ENCODE measurements at regions of chr3 and their contacts with region 1.

Region 1: GRCh38 chr3:69013253-69014021 is at the start of gene EOGT:
- DNase-seq: peak; percentile 79
- H3K4me3 Mint-ChIP-seq: peak within 1 kb of the TSS; percentile 89
- H3K27ac Mint-ChIP-seq: peak within 1 kb of the TSS; percentile 86
- H3K4me1 Mint-ChIP-seq: peaks cover 30% of the 10 kb centered on the region
- H3K27me3 Mint-ChIP-seq: no peaks in the 10 kb centered on the region
- total RNA-seq, gene EOGT: 9.6 and 12.5 TPM in 2 replicates

Region 2: DNA sequence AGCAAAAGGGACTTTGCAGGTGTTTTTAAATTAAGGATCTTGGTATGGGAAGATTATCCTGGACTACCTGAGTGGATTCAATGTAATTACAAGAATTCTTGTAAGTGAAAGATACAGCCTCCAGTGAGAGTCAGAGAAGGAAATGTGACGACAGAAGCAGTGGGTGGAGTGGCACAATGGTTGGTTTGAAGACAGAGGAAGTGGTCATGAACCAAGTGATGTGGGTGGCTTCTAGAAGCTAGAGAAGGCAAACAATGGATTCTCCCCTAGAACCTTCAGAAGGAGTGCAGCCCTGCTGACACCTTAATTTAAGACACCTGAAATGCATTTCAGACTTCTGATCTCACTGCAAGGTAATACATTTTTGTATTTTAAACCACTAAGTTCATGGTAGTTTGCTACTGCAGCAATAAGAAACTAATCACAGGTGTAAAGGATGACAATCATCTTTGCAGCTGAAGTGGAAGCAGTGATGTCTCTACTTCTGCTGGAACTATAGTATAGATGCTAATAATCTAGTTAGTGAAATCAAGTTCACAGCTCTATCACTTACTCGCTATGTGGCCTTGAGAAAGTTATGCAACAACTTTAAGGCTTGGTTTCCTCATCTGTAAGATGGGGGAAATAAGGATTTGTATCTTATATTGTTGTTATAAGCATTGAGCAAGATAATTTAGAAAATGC is 955.7 kb before region 1 on chr3:
- intact Hi-C with region 1: loop called (anchors 10 kb)
- DNase-seq: peak; percentile 66
- H3K4me3 Mint-ChIP-seq: peak overlapping the region; percentile 54
- H3K27ac Mint-ChIP-seq: peak overlapping the region; percentile 76
- H3K4me1 Mint-ChIP-seq: peaks cover 59% of the 10 kb centered on the region
- H3K27me3 Mint-ChIP-seq: no peaks in the 10 kb centered on the region

Region 3: GRCh38 chr3:69033470-69033869 is 20.0 kb after region 1 on chr3:
- intact Hi-C with region 1: loop called (anchors 2 kb)
- DNase-seq: no peak
- H3K4me3 Mint-ChIP-seq: no peak overlapping the region
- H3K27ac Mint-ChIP-seq: peak overlapping the region; percentile 34
- H3K4me1 Mint-ChIP-seq: peaks cover 18% of the 10 kb centered on the region
- H3K27me3 Mint-ChIP-seq: no peaks in the 10 kb centered on the region

Region 4: GRCh38 chr3:69051756-69052471 is 38.5 kb after region 1 on chr3 and contains the start of gene TMF1:
- intact Hi-C with region 1: loop called (anchors 1 kb)
- DNase-seq: peak; percentile 96
- H3K4me3 Mint-ChIP-seq: peak within 1 kb of the TSS; percentile 97
- H3K27ac Mint-ChIP-seq: peak within 1 kb of the TSS; percentile 96
- H3K4me1 Mint-ChIP-seq: peaks cover 56% of the 10 kb centered on the region
- H3K27me3 Mint-ChIP-seq: peaks cover 1% of the 10 kb centered on the region
- total RNA-seq, gene TMF1: 43.0 and 43.1 TPM in 2 replicates

Region 5: GRCh38 chr3:69084326-69085167 is 71.1 kb after region 1 on chr3 and contains the start of gene ARL6IP5:
- intact Hi-C with region 1: loop called (anchors 1 kb)
- DNase-seq: peak; percentile 89
- H3K4me3 Mint-ChIP-seq: peak within 1 kb of the TSS; percentile 98
- H3K27ac Mint-ChIP-seq: peak within 1 kb of the TSS; percentile 94
- H3K4me1 Mint-ChIP-seq: peaks cover 61% of the 10 kb centered on the region
- H3K27me3 Mint-ChIP-seq: no peaks in the 10 kb centered on the region
- total RNA-seq, gene ARL6IP5: 147 and 156 TPM in 2 replicates

Region 6: DNA sequence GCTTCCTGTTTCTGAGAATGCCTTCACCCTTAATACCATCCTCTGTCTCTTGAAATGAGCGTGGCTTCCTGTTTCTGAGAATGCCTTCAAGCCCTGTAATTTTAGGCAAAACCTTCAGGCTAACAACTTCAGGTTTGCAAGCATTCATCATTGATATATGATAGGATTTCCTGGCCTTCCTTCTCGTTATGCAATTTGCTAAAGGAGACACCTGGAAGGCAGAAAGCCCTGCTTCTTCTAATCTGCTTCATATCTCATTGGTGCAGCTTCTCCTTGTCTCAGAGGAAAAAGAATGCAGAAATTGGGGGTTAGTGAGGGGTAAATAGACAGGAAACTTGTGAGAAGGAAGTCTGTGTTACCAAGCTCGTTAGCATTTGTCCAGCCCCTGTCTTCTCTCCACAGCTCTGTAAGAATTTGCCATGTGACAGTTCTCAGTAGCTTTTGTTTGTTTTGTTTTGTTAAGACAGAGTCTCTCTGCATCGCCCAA is 78.6 kb after region 1 on chr3:
- intact Hi-C with region 1: loop called (anchors 1 kb)
- DNase-seq: no peak
- H3K4me3 Mint-ChIP-seq: peak overlapping the region; percentile 84
- H3K27ac Mint-ChIP-seq: peak overlapping the region; percentile 98
- H3K4me1 Mint-ChIP-seq: peaks cover 83% of the 10 kb centered on the region
- H3K27me3 Mint-ChIP-seq: no peaks in the 10 kb centered on the region

Region 7: DNA sequence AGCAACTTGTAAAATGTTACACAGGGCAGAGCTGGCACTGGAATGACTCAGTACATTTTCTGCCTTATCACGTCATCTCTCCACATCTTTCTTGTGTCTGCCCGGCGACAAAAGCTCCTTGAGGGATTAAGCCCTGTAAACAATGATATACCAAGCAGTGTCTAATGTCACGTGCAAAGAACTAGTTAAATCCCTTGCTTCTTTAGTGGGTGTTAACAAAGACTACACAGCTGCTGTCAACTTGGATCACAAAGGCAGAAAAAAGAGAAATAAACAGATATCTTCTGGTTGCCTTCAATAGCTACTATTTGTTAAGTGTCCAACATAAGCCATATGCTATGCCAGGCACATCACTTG is 420.5 kb after region 1 on chr3:
- intact Hi-C with region 1: loop called (anchors 5 kb)
- DNase-seq: no peak
- H3K4me3 Mint-ChIP-seq: no peak overlapping the region
- H3K27ac Mint-ChIP-seq: peak overlapping the region; percentile 54
- H3K4me1 Mint-ChIP-seq: peaks cover 51% of the 10 kb centered on the region
- H3K27me3 Mint-ChIP-seq: no peaks in the 10 kb centered on the region